Activated T-helper 2 cell treated with anti-CD3 and anti-CD28 coated beads, Interferon-gamma antibody, Interleukin-2, Interleukin-4, amounts not matched to agents 10 μg/mL and 5 μg/mL and 100 μg/mL, durations not matched to agents 14 hours and 24 hours and 36 hours (primary cell): ENCODE measurements at regions of chr19 and their contacts with region 1.

Region 1: GRCh38 chr19:3062168-3063102 is at the start of gene TLE5:
- DNase-seq: peak; percentile 66
- H3K4me3 Mint-ChIP-seq: peak within 1 kb of the TSS; percentile 90
- H3K27ac Mint-ChIP-seq: peak within 1 kb of the TSS; percentile 97
- H3K4me1 Mint-ChIP-seq: peaks cover 20% of the 10 kb centered on the region
- H3K27me3 Mint-ChIP-seq: no peaks in the 10 kb centered on the region
- total RNA-seq, gene TLE5: 428 and 432 TPM in 2 replicates

Region 2: DNA sequence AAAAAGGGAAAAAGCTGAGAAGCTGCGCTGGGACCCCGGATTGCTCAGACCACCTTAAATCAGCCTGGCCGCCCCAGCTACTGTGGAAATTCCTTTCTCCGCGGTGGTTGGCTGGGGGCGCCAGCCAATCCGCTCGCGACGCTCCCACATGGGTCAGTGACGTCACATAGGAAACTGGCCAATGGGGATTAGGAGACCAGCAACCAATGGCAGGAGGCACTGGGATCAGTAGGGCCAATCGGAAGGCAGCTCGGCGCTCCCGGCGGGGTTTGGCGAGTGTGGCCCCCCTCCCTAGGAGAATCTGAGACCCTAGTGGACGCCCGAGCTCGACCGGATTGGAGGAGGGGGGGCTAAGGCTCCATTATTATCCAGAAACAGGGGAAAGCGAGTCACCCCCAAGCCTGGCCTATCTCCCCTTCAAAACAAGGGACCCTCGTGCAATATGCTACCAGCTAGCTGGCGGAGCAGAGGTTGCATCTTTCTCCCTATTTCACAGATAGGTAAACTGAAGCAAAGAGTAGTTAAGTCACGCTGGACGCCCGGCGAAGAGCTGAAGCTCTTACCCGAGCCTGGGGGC is 26.8 kb before region 1 on chr19:
- intact Hi-C with region 1: loop called (anchors 1 kb)
- DNase-seq: peak; percentile 94
- H3K4me3 Mint-ChIP-seq: peak overlapping the region; percentile 91
- H3K27ac Mint-ChIP-seq: peak overlapping the region; percentile 95
- H3K4me1 Mint-ChIP-seq: peaks cover 15% of the 10 kb centered on the region
- H3K27me3 Mint-ChIP-seq: peaks cover 28% of the 10 kb centered on the region

Region 3: DNA sequence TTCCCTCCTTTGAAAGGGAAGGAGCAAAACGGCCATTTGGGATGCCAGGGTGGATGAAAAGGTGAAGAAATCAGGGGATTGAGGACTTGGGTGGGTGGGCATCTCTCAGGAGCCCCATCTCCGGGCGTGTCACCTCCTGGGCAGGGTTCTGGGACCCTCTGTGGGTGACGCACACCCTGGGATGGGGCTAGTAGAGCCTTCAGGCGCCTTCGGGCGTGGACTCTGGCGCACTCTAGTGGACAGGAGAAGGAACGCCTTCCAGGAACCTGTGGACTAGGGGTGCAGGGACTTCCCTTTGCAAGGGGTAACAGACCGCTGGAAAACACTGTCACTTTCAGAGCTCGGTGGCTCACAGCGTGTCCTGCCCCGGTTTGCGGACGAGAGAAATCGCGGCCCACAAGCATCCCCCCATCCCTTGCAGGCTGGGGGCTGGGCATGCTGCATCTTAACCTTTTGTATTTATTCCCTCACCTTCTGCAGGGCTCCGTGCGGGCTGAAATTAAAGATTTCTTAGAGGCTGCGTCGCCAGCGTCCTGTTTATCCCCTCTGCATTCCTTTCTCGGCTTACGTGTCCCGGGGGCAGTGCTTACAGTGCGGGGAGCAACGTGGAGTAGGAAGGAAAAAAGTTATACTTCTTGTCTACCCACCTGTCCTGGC is 100.9 kb after region 1 on chr19:
- intact Hi-C with region 1: loop called (anchors 10 kb)
- DNase-seq: peak; percentile 56
- H3K4me3 Mint-ChIP-seq: no peak overlapping the region
- H3K27ac Mint-ChIP-seq: no peak overlapping the region
- H3K4me1 Mint-ChIP-seq: peaks cover 30% of the 10 kb centered on the region
- H3K27me3 Mint-ChIP-seq: no peaks in the 10 kb centered on the region